ENCODE measurements at regions of chr3 and their contacts with region 1.

Region 1: DNA sequence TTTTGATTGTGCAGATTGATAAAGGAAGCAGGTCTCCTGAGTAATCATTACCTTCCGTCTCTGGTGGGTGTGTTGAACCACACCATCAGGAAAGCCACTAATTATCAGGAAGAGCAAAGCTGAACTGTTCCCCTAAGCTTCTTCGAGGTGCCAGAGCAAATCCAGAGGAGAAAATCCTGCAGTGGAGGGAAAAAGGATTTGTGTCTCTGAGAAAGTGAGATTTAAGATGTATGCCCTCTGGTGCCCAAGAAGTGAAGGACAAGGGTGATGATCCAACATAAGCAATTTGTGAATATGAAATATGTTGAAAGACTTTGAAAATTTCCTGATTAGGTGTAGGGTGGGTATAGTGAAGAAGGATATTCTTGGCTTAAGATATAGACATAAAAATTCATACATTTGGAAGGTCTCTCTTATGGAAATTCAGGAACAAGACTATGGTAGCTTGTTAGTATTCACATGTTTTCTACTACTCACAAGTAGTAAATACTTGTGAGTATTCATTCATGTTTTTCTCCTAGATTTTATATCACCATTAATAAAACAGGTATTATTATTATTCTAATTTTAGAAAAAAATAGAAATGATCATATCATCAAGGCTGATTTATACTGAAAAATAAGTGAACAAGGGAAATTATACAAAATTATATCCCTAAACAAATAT is 34.8 kb downstream of the COMMD2 start:
- DNase-seq: peak; percentile 37
- H3K4me3 ChIP-seq: no peak overlapping the region
- CTCF ChIP-seq: peak; percentile 60

Region 2: GRCh38 chr3:149258298-149258697 is 459.2 kb before region 1 on chr3:
- CTCF ChIA-PET with region 1: no interaction called
- POLR2A ChIA-PET with region 1: no interaction called
- DNase-seq: no peak
- H3K4me3 ChIP-seq: no peak overlapping the region
- CTCF ChIP-seq: no peak

Region 3: GRCh38 chr3:149494022-149494758 is 223.3 kb before region 1 on chr3:
- CTCF ChIA-PET with region 1: interaction called, 12 read pairs
- POLR2A ChIA-PET with region 1: no interaction called
- DNase-seq: no peak
- H3K4me3 ChIP-seq: no peak overlapping the region
- CTCF ChIP-seq: peak; percentile 83

Region 4: GRCh38 chr3:149527531-149528339 is 189.8 kb before region 1 on chr3:
- CTCF ChIA-PET with region 1: interaction called, 90 read pairs
- POLR2A ChIA-PET with region 1: no interaction called
- DNase-seq: no peak
- H3K4me3 ChIP-seq: no peak overlapping the region
- CTCF ChIP-seq: peak; percentile 12

Region 5: GRCh38 chr3:149566292-149566975 is 151.1 kb before region 1 on chr3:
- CTCF ChIA-PET with region 1: interaction called, 59 read pairs
- POLR2A ChIA-PET with region 1: no interaction called
- DNase-seq: no peak
- H3K4me3 ChIP-seq: no peak overlapping the region
- CTCF ChIP-seq: no peak

Region 6: DNA sequence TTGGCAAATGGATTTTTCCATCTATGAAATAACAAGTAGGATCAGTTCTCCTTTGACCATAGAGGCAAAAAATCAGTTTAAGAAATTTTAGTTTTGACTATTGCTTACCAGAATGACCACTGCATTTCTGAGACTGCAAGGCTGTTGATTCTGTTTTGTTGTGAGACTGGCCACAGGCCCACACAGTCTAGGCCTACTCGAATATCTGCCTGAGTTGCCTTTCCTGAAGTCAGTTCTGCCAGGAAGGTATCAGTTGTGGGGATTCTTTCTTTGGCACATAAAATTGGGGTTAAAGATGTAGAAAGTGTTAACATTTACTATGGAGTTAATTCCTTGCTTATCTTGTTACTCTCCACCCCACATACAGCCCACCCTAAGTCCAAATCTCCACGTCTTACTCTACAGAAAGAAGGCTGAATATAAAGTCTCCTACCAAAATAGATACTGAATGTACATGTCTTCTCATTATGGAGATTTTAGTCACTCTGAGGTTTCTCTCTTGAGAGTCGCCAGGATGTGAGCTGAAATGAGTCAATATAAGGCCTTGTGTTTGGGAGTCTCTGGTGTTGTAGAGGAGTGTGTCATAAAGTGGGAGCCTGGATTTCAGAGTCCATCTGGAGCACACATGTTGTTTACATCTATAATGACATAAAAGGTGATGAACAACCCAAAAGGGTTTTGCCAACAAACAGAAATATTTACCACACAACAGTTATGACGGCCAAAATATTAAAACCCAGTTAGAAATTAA is 14.7 kb before region 1 on chr3:
- CTCF ChIA-PET with region 1: interaction called, 45 read pairs
- POLR2A ChIA-PET with region 1: no interaction called
- DNase-seq: peak; percentile 82
- H3K4me3 ChIP-seq: no peak overlapping the region
- CTCF ChIP-seq: no peak

Region 7: DNA sequence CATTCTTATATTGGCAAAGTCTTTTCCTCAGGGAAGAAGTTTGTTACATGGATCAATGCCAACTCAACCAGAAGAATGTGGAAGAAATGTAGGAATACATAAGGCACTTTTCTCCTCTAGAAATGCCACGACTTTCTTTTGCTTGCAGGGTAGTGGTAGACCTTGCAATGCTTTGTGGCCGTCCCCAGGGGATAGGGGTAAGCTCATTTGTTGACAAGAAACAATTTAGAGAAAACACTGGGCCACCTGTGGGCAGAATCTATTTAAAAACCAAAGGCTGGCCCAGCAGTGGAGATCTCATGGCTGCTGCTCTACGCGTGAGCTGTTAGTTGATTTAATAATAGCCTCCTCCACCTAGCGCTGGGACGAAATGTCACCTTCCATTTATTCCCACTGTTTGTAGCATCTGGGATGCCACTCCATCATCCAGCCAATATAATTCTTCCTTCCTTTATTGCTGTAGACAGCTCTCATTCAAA is 317.8 kb after region 1 on chr3:
- CTCF ChIA-PET with region 1: no interaction called
- POLR2A ChIA-PET with region 1: no interaction called
- DNase-seq: no peak
- H3K4me3 ChIP-seq: no peak overlapping the region
- CTCF ChIP-seq: no peak

Measured in AG04449 (cell line).